MCF 10A (cell line): ENCODE measurements at regions of chr1 and their contacts with region 1.

Region 1: DNA sequence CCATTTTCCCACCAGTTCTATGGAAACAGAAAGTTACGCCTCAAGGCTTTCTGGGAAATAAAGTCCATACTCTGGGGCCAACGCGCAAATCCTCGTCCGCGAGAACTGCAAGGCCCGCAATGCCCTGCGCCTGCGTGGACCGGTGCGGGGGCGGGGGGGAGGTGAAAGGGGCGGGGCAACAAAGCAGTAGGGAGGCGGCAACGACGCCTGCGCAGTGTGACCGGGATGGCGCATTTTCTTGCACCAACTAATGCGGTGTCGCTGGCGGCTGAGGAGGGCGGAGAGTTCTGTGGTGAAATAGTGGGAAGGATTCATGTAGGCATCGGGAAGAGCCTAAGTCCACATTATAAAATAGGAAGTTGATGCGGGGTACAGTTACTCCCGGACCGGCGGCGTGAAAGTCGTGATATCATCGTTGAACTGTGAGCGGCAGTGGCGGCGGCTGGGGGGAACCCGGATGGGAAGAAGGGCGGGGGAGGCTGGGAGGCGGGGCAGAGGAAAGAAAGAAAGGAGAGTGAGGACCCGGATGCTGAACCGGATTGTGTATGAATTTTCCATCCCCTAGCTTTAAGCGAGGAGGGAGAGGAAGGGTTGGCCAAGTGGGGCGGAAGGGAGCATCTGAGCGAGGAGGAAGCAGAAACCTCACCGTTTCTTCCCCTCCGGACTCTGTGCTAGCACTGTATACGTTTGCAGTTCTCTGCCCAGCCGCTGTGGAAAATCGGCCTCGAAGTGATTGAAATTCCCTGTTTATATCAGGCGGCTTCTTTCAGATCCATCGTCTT is at the start of gene GGPS1:
- DNase-seq: peak; percentile 100
- H3K4me3 Mint-ChIP-seq: no peak within 1 kb of the TSS
- H3K27ac Mint-ChIP-seq: no peak within 1 kb of the TSS
- H3K4me1 Mint-ChIP-seq: peaks cover 23% of the 10 kb centered on the region
- H3K27me3 Mint-ChIP-seq: no peaks in the 10 kb centered on the region
- CTCF ChIP-seq: peak; percentile 6
- total RNA-seq, gene GGPS1: 56.5 and 74.8 TPM in 2 replicates

Region 2: GRCh38 chr1:235128456-235129328 is 199.9 kb before region 1 on chr1 and contains the start of gene TOMM20:
- CTCF ChIA-PET with region 1: no interaction called
- POLR2A ChIA-PET with region 1: interaction called, 32 read pairs
- intact Hi-C with region 1: no loop called
- DNase-seq: peak; percentile 100
- H3K4me3 Mint-ChIP-seq: peak within 1 kb of the TSS; percentile 100
- H3K27ac Mint-ChIP-seq: peak within 1 kb of the TSS; percentile 99
- H3K4me1 Mint-ChIP-seq: peaks cover 23% of the 10 kb centered on the region
- H3K27me3 Mint-ChIP-seq: no peaks in the 10 kb centered on the region
- CTCF ChIP-seq: no peak
- total RNA-seq, gene TOMM20: 309 and 339 TPM in 2 replicates

Region 3: DNA sequence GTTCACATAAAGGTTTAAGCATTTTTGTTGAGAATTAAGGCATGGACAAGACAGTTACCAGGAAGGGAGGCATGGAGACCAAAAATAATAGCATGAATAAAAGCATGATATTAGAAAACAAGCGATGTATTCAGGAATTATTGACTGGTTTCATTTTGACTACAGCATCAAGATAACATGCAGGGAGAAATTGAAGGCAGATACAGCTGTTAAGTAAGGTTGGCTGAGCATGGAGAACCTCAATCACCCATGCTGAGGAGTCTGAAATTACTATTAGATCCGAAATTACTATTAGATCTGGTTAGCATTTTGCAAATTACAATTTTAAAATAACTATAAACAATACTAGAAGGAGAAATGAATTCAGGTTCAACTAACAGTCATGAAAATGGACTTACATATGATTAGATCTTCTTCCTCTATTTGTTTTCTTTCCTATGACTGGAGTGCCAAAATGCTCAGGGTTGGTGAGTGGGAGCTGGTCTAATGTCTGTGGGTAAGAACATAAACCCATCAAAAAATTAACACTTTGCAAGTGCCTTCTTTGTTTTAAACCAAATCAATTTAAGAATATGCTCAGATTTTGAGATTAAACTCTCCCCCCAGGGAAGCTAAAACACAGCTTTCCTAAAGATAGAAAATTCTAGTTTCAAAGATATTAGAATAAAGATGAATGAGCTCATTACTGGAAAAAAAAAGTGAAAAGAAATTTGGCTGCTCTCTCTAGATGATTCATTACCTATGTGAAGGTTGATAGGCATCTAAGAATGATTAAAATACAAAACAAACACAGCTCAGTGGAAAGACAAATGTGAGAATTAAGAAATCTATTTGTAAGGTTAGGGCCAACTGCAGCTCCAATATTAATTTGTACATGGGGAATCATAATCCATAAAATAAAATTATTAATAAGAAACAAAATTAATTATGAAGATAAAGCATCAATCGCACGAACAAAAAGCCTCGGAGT is 82.2 kb before region 1 on chr1:
- CTCF ChIA-PET with region 1: interaction called, 3 read pairs
- POLR2A ChIA-PET with region 1: interaction called, 33 read pairs
- intact Hi-C with region 1: no loop called
- DNase-seq: peak; percentile 35
- H3K4me3 Mint-ChIP-seq: no peak overlapping the region
- H3K27ac Mint-ChIP-seq: peak overlapping the region; percentile 10
- H3K4me1 Mint-ChIP-seq: peaks cover 18% of the 10 kb centered on the region
- H3K27me3 Mint-ChIP-seq: no peaks in the 10 kb centered on the region
- CTCF ChIP-seq: no peak

Region 4: DNA sequence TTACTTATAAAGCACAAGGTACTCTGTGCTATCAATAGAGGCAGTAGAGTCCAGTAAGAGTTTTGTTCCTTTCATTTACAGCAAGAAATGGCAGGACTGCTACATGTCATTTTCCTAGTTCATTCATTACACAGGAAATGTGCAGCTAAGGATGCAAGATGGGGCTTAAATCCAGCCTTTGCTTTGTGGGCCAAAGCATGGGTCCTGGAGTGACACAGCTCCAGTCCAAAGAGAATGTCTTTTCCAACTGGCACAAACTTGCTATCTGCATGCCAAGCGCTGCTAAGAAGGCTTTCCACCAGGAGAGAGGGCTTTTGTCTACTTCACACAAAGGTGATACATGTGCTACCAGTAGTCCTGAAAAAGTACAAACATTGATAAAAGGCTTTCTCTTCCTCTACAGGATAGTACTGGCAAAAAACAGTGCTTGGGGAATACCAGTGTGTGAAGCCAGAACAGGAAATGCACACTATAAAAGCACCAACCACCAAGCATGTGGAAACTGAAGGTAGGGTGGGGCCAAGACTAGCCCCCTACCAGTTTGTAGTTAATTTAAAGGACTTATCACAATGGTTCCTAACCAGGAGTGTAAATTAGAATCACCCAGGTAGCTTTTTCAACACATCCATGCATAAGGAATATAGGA is 69.3 kb before region 1 on chr1:
- CTCF ChIA-PET with region 1: interaction called, 5 read pairs
- POLR2A ChIA-PET with region 1: interaction called, 20 read pairs
- intact Hi-C with region 1: no loop called
- DNase-seq: no peak
- H3K4me3 Mint-ChIP-seq: no peak overlapping the region
- H3K27ac Mint-ChIP-seq: no peak overlapping the region
- H3K4me1 Mint-ChIP-seq: peaks cover 7% of the 10 kb centered on the region
- H3K27me3 Mint-ChIP-seq: no peaks in the 10 kb centered on the region
- CTCF ChIP-seq: no peak

Region 5: GRCh38 chr1:235317168-235317567 is 11.4 kb before region 1 on chr1:
- CTCF ChIA-PET with region 1: interaction called, 5 read pairs
- POLR2A ChIA-PET with region 1: interaction called, 193 read pairs
- intact Hi-C with region 1: no loop called
- DNase-seq: no peak
- H3K4me3 Mint-ChIP-seq: no peak overlapping the region
- H3K27ac Mint-ChIP-seq: peak overlapping the region; percentile 17
- H3K4me1 Mint-ChIP-seq: peaks cover 46% of the 10 kb centered on the region
- H3K27me3 Mint-ChIP-seq: no peaks in the 10 kb centered on the region
- CTCF ChIP-seq: no peak

Region 6: GRCh38 chr1:235367000-235367908 is 38.7 kb after region 1 on chr1 and contains the start of gene TBCE:
- CTCF ChIA-PET with region 1: interaction called, 16 read pairs
- POLR2A ChIA-PET with region 1: interaction called, 156 read pairs
- intact Hi-C with region 1: loop called (anchors 1 kb)
- DNase-seq: peak; percentile 100
- H3K4me3 Mint-ChIP-seq: peak within 1 kb of the TSS; percentile 96
- H3K27ac Mint-ChIP-seq: peak within 1 kb of the TSS; percentile 94
- H3K4me1 Mint-ChIP-seq: peaks cover 26% of the 10 kb centered on the region
- H3K27me3 Mint-ChIP-seq: no peaks in the 10 kb centered on the region
- CTCF ChIP-seq: peak; percentile 16
- total RNA-seq, gene TBCE: 45.6 and 52.5 TPM in 2 replicates